Activated CD4-positive, alpha-beta T cell treated with anti-CD3 and anti-CD28 coated beads for 36 hours (primary cell): ENCODE measurements at regions of chr5 and their contacts with region 1.

Region 1: DNA sequence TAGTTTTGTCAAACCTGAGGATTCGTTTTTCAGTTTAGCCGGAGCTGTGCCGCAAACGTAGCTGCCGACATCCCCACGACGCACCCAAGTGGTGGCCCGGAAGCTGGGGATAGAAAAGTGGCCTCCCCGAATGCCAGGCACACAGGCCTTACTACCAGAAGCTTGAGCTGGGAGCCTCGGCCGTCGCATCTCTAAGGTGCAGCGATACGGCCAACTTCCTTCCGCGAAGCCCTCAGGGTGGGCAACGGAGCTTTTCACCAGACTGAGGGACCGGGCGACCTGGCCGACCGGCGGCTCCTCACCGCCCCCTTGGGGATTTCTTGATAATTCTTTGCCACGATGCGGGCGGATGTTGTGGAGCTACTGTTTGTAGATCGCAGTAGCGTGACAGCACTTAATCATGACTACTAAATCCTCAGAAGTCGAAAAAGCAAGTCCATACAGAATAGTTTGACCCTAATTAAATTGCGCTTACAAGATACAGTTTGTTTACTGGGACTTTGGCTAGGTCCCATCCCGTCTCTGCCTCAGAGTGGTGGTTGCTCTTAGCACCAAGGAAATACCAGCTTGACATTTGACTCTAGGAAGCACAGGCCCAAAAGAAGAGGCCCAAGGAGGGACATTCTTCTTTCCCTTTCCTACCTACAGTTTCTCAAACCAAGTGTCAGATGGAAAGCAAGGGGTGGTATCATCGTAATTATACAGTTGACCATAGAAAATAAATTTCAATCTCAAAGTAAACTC is 613 bp upstream of the TMEM267 start:
- DNase-seq: peak; percentile 92
- ATAC-seq: peak; percentile 73
- H3K4me3 Mint-ChIP-seq: peak overlapping the region; percentile 97
- H3K27ac Mint-ChIP-seq: peak overlapping the region; percentile 100
- H3K4me1 Mint-ChIP-seq: peaks cover 37% of the 10 kb centered on the region
- H3K27me3 Mint-ChIP-seq: no peaks in the 10 kb centered on the region

Region 2: DNA sequence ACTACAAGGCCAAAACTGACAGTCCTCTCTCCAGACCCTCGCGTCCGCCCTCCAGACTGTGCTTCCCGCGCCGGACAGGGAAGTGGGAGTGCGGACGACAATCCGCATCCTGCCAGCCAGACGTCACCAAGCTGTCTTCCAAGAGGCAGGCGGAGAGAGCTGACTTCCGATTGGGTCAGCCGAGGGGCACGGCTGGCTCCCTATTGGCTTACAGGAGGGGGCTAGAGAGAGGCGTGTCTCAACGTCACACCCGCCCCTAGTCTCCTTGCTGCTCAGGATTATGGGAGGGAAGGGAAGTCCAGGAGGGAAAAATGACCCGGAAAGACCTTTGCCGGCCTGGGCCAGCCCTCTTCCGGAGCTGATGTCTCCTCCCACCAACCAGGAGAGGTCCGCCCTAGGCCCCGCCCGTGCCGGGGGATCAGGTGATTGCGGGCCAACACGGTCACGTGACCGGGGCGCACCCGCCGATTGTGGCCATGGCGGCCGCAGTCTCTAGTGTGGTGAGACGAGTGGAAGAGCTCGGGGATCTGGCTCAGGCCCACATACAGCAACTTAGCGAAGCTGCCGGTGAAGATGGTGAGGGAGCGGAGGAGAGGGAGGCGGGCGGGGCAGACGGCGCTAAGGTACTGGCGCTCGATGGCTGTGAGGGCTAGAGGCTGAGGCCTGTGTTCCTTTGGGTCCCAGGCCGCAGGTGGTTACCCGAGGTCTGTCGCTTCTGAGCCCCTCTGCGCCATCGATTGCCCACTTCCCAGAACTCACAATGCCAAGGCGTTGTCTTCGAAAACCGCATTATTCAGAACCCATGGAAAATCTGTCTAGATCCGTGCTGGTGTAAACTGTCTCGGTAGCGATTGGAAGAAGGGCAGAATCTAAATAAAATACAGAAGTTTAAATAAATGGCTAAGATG is 1580.1 kb before region 1 on chr5 and contains the start of gene RIMOC1:
- CTCF ChIA-PET with region 1: no interaction called
- POLR2A ChIA-PET with region 1: no interaction called
- intact Hi-C with region 1: loop called in 1 of 2 experiments (anchors 1 kb)
- DNase-seq: peak; percentile 98
- ATAC-seq: peak; percentile 97
- H3K4me3 Mint-ChIP-seq: peak within 1 kb of the TSS; percentile 91
- H3K27ac Mint-ChIP-seq: peak within 1 kb of the TSS; percentile 98
- H3K4me1 Mint-ChIP-seq: peaks cover 47% of the 10 kb centered on the region
- H3K27me3 Mint-ChIP-seq: no peaks in the 10 kb centered on the region
- total RNA-seq, gene RIMOC1: 25.4 to 26.7 TPM

Region 3: GRCh38 chr5:43040287-43041098 is 443.8 kb before region 1 on chr5 and contains the start of gene ANXA2R:
- CTCF ChIA-PET with region 1: interaction called, 4 read pairs
- POLR2A ChIA-PET with region 1: interaction called, 4 read pairs
- intact Hi-C with region 1: loop called in 1 of 2 experiments (anchors 1 kb)
- DNase-seq: peak; percentile 96
- ATAC-seq: peak; percentile 56
- H3K4me3 Mint-ChIP-seq: peak within 1 kb of the TSS; percentile 81
- H3K27ac Mint-ChIP-seq: peak within 1 kb of the TSS; percentile 94
- H3K4me1 Mint-ChIP-seq: peaks cover 39% of the 10 kb centered on the region
- H3K27me3 Mint-ChIP-seq: no peaks in the 10 kb centered on the region
- total RNA-seq, gene ANXA2R: 3.2 to 4.6 TPM

Region 4: DNA sequence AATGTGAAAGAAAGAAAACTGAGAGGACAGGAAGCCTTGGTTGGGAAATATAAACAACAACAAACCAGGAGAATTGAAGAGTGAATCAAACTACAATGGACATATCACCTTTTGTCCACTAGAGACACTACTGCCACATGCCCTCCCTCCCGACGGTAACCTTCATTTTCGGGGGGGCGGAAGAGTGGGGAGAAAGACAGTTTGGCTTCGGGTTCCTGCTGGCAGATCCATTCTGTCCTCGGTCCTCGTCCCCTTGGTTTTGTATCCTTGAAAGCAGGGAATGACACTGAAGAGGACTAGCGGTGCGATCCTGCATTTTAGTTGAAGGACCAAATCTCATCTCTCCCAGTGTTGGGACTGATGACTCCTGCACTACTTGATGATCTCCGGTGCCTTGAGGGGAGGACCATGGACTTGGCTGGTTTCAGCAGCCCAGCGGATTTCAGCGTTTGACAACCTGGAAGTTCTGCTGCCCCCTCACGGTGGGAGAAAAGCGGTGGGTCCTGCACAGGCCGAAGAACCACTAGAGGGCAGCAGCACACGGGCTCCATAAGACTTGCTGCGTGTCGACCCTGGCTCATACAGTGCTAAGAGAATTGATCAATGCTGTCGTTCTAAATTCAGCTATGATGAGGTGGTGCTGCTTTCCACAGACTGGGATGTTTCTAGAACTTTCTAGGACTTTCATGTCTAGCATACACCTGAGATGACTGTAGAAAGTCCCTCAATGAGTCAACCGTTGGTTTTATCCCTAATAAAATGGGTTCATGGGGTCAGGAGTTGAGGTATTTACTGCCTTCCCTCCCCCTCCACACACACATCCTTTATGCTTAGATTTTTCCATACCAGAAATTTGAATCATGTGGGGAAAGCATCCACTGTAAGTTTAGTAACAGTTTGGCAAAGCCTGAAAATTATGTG is 378.6 kb before region 1 on chr5:
- CTCF ChIA-PET with region 1: interaction called, 5 read pairs
- POLR2A ChIA-PET with region 1: no interaction called
- intact Hi-C with region 1: loop called in 1 of 2 experiments (anchors 2 kb)
- DNase-seq: peak; percentile 93
- ATAC-seq: peak; percentile 91
- H3K4me3 Mint-ChIP-seq: peak overlapping the region; percentile 71
- H3K27ac Mint-ChIP-seq: peak overlapping the region; percentile 91
- H3K4me1 Mint-ChIP-seq: peaks cover 43% of the 10 kb centered on the region
- H3K27me3 Mint-ChIP-seq: no peaks in the 10 kb centered on the region

Region 5: DNA sequence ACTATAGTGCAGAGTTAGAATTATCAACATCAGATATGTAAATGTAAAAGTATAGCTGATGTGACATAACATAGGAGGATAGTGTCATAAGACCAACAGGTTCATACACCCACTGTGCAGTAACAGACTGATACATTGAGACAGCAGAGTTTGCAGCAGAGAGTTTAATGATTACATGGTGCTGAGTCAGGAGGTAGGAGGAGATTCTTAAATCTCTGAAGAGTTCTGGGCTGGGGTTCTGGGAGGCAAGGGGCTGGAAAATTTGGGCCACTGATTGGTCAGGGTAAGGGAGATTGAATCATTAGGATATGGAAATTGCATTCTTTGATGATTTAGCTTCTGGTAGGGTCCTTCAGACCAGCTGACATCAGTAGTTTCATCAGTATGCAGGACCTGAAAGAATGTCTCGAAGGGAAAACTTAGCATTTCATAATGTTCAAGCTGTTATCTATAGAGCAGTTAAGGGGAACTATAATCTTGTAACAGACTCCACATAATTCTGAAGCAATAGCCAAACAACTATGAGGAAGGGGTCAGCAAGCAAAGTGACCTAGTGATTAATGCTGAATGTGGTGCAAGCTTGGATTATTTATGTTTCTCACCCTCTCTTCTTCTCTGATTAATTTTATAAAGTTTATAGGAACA is 107.7 kb before region 1 on chr5:
- CTCF ChIA-PET with region 1: no interaction called
- POLR2A ChIA-PET with region 1: no interaction called
- intact Hi-C with region 1: no loop called
- DNase-seq: no peak
- ATAC-seq: no peak
- H3K4me3 Mint-ChIP-seq: no peak overlapping the region
- H3K27ac Mint-ChIP-seq: no peak overlapping the region
- H3K4me1 Mint-ChIP-seq: no peaks in the 10 kb centered on the region
- H3K27me3 Mint-ChIP-seq: no peaks in the 10 kb centered on the region

Region 6: GRCh38 chr5:43389679-43390329 is 94.5 kb before region 1 on chr5:
- CTCF ChIA-PET with region 1: interaction called, 17 read pairs
- POLR2A ChIA-PET with region 1: no interaction called
- intact Hi-C with region 1: no loop called
- DNase-seq: peak; percentile 63
- ATAC-seq: peak; percentile 85
- H3K4me3 Mint-ChIP-seq: no peak overlapping the region
- H3K27ac Mint-ChIP-seq: no peak overlapping the region
- H3K4me1 Mint-ChIP-seq: peaks cover 32% of the 10 kb centered on the region
- H3K27me3 Mint-ChIP-seq: no peaks in the 10 kb centered on the region

Region 7: DNA sequence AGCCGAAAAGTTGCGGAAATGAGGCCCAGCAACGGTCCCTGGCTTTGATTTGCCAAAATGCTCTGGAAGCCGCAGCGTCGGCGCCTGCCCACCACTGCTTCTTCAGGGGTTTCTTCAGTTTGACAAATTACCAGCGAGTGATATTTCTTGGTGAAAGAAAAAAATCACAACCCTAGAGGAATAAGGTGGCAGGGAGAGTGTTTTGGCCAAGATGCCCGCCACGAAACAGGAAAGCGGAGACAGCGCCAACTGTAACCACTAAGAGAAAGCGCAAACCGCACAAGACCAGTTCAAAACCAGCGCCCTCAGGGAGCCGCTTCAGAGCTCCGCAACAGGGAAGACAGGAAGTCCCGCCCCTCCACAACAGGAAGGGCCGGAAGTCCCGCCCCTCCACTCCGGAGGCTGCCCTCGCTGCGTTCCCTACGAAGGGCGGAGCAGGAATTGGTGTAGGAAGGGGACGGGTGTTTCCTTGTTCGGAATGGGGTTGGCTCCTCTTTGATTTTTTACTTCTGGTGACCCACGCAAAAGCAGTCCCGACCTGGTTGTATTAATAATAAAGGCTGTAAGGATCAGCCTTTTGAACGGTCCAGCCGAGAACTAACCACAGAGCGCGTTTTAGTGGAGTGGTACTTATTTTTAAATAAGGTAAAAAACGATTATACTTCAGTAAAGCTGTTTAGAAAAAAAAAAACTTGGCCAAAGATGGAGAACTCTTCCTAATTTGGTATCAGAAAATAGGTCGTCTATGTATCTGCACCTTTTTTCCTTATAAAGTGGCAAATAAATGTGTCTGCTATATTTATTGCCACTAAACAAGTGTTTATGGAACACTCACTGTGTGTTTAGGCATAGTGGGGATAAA is 30.8 kb after region 1 on chr5 and contains the start of gene C5orf34:
- CTCF ChIA-PET with region 1: interaction called, 26 read pairs
- POLR2A ChIA-PET with region 1: interaction called, 19 read pairs
- intact Hi-C with region 1: loop called (anchors 1 kb)
- DNase-seq: peak; percentile 97
- ATAC-seq: peak; percentile 93
- H3K4me3 Mint-ChIP-seq: peak within 1 kb of the TSS; percentile 89
- H3K27ac Mint-ChIP-seq: peak within 1 kb of the TSS; percentile 99
- H3K4me1 Mint-ChIP-seq: peaks cover 23% of the 10 kb centered on the region
- H3K27me3 Mint-ChIP-seq: no peaks in the 10 kb centered on the region
- total RNA-seq, gene C5orf34: 14.4 to 16.8 TPM

Region 8: DNA sequence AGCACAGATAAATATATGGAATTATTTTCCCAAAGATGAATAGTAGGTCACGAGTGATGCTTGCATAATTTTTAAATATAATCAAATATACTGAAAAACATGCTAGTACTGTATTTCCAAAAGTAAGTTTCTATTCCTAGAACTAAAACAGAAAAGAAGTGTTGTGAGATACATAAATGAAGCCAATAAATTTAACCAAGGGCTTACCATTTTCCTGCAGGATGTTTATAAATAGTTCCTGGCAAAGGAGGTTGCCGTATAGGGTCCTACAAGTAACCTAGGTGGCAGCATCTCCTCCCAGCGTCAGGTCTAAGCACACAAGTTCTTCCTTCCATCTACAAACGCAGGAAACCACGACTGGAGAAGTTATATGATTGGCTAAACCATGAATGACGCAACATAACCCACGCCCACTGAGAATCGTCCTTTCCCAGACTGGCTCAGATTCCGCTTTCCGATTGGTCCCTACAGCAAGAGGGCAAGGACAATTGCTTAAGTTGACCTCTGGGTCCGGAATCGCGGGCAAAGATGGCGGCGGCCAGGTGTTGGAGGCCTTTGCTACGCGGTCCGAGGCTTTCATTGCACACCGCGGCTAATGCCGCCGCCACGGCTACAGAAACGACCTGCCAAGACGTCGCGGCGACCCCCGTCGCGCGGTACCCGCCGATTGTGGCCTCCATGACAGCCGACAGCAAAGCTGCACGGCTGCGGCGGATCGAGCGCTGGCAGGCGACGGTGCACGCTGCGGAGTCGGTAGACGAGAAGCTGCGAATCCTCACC is 1324.3 kb after region 1 on chr5 and contains the start of gene MRPS30:
- CTCF ChIA-PET with region 1: no interaction called
- POLR2A ChIA-PET with region 1: no interaction called
- intact Hi-C with region 1: loop called in 1 of 2 experiments (anchors 5 kb)
- DNase-seq: peak; percentile 93
- ATAC-seq: peak; percentile 96
- H3K4me3 Mint-ChIP-seq: peak within 1 kb of the TSS; percentile 91
- H3K27ac Mint-ChIP-seq: peak within 1 kb of the TSS; percentile 98
- H3K4me1 Mint-ChIP-seq: peaks cover 27% of the 10 kb centered on the region
- H3K27me3 Mint-ChIP-seq: no peaks in the 10 kb centered on the region
- total RNA-seq, gene MRPS30: 59.7 to 73.3 TPM